ENCODE measurements at regions of chr2 and their contacts with region 1.

Region 1: GRCh38 chr2:26299471-26300101 is 46.4 kb upstream of the SELENOI start:
- DNase-seq: peak; percentile 76
- H3K4me3 ChIP-seq: peak overlapping the region; percentile 27 to 60 (median 37)
- H3K27ac ChIP-seq: peak overlapping the region; percentile 64
- H3K4me1 ChIP-seq: peaks cover 15% of the 10 kb centered on the region
- H3K27me3 ChIP-seq: no peaks in the 10 kb centered on the region
- CTCF ChIP-seq: no peak
- POLR2A ChIP-seq: peak; percentile 31

Region 2: GRCh38 chr2:26244309-26245121 is 55.1 kb before region 1 on chr2 and contains the starts of genes HADHA and HADHB:
- CTCF ChIA-PET with region 1: interaction called, 3 read pairs
- POLR2A ChIA-PET with region 1: no interaction called
- dilution Hi-C with region 1: no loop called
- intact Hi-C with region 1: loop called (anchors 1 kb)
- DNase-seq: peak; percentile 94
- H3K4me3 ChIP-seq: peak within 1 kb of the TSS; percentile 80 to 92 (median 85)
- H3K27ac ChIP-seq: peak within 1 kb of the TSS; percentile 94
- H3K4me1 ChIP-seq: peaks cover 19% of the 10 kb centered on the region
- H3K27me3 ChIP-seq: no peaks in the 10 kb centered on the region
- CTCF ChIP-seq: peak in 1 of 2 donors; percentile 34
- POLR2A ChIP-seq: peak; percentile 78
- total RNA-seq, gene HADHA: 151 and 158 TPM in 2 replicates
- total RNA-seq, gene HADHB: 85.6 and 100 TPM in 2 replicates

Measured in endothelial cell of umbilical vein (primary cell).